ENCODE measurements at regions of chr17 and their contacts with region 1.

Region 1: GRCh38 chr17:43024407-43025289 is at the start of gene RND2:
- DNase-seq: peak; percentile 75 to 94 (median 91)
- H3K4me3 ChIP-seq: peak within 1 kb of the TSS; percentile 33 to 82 (median 67)
- H3K27ac ChIP-seq: peak within 1 kb of the TSS in 44 of 59 donors; percentile 10 to 84 (median 58)
- H3K27me3 ChIP-seq: no peaks in the 10 kb centered on the region
- CTCF ChIP-seq: peak; percentile 37 to 91 (median 83)
- total RNA-seq, gene RND2: 12.1 to 32.7 (median 19.2) TPM

Region 2: DNA sequence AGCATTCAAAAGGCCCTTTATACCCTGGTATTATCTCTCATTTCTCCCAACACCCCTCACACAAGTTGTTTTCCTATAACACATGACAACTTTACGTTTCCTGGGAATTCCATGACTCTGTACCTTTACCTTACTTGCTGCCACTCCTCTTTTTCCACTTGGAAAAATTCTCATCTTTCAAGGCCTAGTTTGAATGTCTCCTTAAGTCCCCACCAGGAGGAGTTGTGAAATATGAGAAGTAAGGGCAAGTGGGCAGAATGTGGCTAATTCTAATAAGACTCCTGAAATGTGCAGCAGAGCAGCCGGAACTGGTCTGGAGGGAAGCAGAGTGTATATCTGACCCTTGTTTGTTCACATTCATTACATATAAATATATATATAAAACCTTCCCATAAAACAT is 60.8 kb after region 1 on chr17:
- intact Hi-C with region 1: loop called in 1 of 2 experiments (anchors 2 kb)
- DNase-seq: no peak
- H3K4me3 ChIP-seq: no peak overlapping the region
- H3K27ac ChIP-seq: no peak overlapping the region
- H3K27me3 ChIP-seq: no peaks in the 10 kb centered on the region
- CTCF ChIP-seq: no peak

Region 3: DNA sequence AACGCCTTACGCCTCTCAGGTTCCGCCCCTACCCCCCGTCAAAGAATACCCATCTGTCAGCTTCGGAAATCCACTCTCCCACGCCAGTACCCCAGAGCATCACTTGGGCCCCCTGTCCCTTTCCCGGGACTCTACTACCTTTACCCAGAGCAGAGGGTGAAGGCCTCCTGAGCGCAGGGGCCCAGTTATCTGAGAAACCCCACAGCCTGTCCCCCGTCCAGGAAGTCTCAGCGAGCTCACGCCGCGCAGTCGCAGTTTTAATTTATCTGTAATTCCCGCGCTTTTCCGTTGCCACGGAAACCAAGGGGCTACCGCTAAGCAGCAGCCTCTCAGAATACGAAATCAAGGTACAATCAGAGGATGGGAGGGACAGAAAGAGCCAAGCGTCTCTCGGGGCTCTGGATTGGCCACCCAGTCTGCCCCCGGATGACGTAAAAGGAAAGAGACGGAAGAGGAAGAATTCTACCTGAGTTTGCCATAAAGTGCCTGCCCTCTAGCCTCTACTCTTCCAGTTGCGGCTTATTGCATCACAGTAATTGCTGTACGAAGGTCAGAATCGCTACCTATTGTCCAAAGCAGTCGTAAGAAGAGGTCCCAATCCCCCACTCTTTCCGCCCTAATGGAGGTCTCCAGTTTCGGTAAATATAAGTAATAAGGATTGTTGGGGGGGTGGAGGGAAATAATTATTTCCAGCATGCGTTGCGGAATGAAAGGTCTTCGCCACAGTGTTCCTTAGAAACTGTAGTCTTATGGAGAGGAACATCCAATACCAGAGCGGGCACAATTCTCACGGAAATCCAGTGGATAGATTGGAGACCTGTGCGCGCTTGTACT is 100.7 kb after region 1 on chr17 and contains the start of gene BRCA1:
- intact Hi-C with region 1: loop called in 1 of 2 experiments (anchors 2 kb)
- DNase-seq: peak; percentile 67 to 94 (median 90)
- H3K4me3 ChIP-seq: peak within 1 kb of the TSS; percentile 57 to 95 (median 78)
- H3K27ac ChIP-seq: peak within 1 kb of the TSS in 49 of 59 donors; percentile 4 to 88 (median 72)
- H3K27me3 ChIP-seq: no peaks in the 10 kb centered on the region
- CTCF ChIP-seq: peak in 31 of 56 donors; percentile 9 to 47 (median 26)
- total RNA-seq, gene BRCA1: 3.9 to 29.8 (median 9.9) TPM

Region 4: GRCh38 chr17:43316522-43317142 is 292.0 kb after region 1 on chr17:
- intact Hi-C with region 1: loop called in 1 of 2 experiments (anchors 5 kb)
- DNase-seq: peak in 1 of 10 donors; percentile 15
- H3K4me3 ChIP-seq: no peak overlapping the region
- H3K27ac ChIP-seq: peak overlapping the region in 2 of 59 donors; percentile 18 to 50
- H3K27me3 ChIP-seq: no peaks in the 10 kb centered on the region
- CTCF ChIP-seq: no peak

Region 5: GRCh38 chr17:43338886-43339516 is 314.4 kb after region 1 on chr17:
- intact Hi-C with region 1: loop called (anchors 5 to 10 kb)
- DNase-seq: peak; percentile 86 to 96 (median 89)
- H3K4me3 ChIP-seq: peak overlapping the region in 3 of 59 donors; percentile 2 to 19 (median 11)
- H3K27ac ChIP-seq: peak overlapping the region in 51 of 59 donors; percentile 26 to 91 (median 76)
- H3K27me3 ChIP-seq: no peaks in the 10 kb centered on the region
- CTCF ChIP-seq: peak; percentile 50 to 93 (median 82)

Measured in dorsolateral prefrontal cortex (tissue), 120 donors.